H1 (cell line): ENCODE measurements at regions of chr1 and their contacts with region 1.

Region 1: DNA sequence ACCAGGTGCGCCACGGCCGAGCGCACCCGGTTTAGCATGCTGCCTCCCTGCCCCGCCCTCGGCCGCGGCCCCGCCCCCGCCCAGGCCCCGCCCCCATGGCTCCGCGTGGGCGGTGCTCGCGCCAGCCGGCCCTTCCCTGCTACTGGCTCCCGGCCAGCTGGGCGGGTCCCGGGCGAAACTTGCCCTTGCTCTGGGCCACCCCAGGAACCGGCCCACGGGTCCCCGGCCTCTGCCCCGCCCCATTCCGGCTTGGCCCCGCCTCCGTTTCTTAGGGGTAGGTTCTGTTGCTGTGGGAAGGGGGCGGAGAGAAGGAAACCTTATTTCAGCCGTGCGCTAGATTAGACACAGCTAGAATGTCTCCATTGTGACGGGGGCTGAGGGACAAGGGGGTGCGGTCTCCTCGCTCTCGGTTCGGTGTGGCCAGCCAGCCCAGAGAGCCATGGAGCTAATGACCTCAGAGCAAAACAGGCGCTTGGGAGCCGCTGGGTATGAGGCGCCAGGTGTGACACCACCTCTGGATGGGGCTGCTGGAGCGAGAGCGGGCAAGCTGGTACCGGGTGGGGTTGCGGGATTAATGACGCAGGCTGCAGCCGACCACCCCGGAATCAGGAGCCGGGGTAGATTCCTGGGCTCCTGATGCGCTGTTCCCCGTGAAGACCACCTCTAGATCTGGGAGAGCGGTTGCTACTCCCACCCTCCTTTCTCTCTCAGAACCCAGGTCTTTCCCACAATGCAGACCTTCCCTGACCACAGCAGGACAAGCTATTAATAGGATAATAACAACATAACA is at the start of gene PPM1J:
- DNase-seq: peak; percentile 85 to 100
- H3K4me3 ChIP-seq: peak within 1 kb of the TSS; percentile 60 to 81 (median 73)
- H3K27ac ChIP-seq: no peak within 1 kb of the TSS
- H3K4me1 ChIP-seq: peaks cover 0 to 20% (median 13%) of the 10 kb centered on the region in 4 experiments; a peak in 6 of 7 replicates
- H3K27me3 ChIP-seq: peaks cover 0 to 29% (median 16%) of the 10 kb centered on the region in 4 experiments; a peak in 5 of 7 replicates
- CTCF ChIP-seq: no peak
- EP300 ChIP-seq: no peak
- POLR2A ChIP-seq: no peak
- RAD21 ChIP-seq: no peak; a peak in 1 of 4 replicates
- total RNA-seq, gene PPM1J: 17.5 and 19.4 TPM in 2 replicates

Region 2: DNA sequence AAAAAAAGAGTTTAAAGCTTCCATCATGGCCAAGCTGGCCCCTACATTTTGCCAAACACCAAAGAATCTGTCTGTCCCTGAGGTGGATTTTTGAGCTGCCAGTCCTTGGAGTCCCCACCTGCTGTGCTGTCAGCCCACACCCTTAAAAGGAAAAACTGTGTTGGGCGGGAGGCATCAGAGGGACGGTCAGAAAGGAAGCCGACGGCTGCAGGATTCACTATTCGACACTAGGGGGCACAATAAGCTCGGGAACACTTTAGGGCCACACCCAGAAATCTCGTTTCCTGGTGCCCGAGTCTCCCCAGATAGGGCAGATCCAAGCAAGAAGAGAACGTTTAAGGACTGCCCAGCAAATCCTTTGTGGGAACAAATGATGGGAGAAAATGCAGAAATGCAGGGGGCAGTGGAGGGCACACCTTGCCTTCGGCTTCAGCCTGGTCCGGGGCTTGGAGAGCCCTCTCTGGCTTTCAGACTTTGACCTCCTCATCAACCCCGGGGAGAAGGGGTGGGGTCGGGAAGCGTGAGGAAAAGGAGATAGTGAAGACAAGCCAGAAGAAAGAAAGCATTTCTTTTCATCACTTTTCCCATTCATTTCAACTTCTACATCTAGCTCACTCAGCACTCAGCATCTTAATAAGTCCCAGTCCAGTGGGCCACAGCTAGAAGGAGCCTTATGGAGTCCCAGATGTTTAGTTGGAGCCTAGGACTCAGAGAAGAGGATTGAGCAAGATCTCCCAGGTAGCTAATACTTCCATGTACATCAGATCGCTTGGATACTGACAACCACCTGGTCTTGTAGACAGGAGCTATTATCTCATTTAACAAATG is 324.5 kb before region 1 on chr1:
- CTCF ChIA-PET with region 1: interaction called, 10 read pairs
- POLR2A ChIA-PET with region 1: interaction called, 3 read pairs
- DNase-seq: peak; percentile 85 to 93
- H3K4me3 ChIP-seq: peak overlapping the region in 3 of 4 experiments; percentile 8 to 54 (median 15); a peak in 4 of 8 replicates
- H3K27ac ChIP-seq: no peak overlapping the region
- H3K4me1 ChIP-seq: peaks cover 2 to 14% (median 8%) of the 10 kb centered on the region in 4 experiments; a peak in 5 of 7 replicates
- H3K27me3 ChIP-seq: no peaks in the 10 kb centered on the region
- CTCF ChIP-seq: peak; percentile 72 to 97 (median 78)
- EP300 ChIP-seq: no peak
- POLR2A ChIP-seq: no peak
- RAD21 ChIP-seq: peak; percentile 92 to 94

Region 3: DNA sequence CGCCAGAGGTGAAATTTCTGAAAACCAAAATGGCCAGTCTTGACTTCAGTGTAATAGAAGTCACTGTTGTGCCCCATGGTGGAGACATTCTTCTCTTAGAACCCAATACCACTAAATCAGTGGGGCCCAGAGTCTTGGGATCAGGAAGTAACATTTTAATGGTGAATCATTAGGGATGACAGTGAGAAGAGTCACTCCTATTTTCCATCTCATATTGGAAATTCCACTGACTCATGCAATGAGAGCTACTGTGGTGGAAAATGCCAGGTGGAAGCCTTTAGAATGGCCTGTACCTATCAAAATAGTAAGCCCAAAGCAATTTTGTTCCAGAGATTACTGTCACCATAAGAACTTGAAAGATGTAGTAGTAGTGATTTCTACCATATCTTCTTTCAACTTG is 20.3 kb after region 1 on chr1:
- CTCF ChIA-PET with region 1: interaction called, 73 read pairs
- POLR2A ChIA-PET with region 1: no interaction called
- DNase-seq: no peak
- H3K4me3 ChIP-seq: no peak overlapping the region
- H3K27ac ChIP-seq: no peak overlapping the region
- H3K4me1 ChIP-seq: no peaks in the 10 kb centered on the region
- H3K27me3 ChIP-seq: no peaks in the 10 kb centered on the region; a peak in 1 of 7 replicates
- CTCF ChIP-seq: no peak
- EP300 ChIP-seq: no peak
- POLR2A ChIP-seq: no peak
- RAD21 ChIP-seq: no peak

Region 4: DNA sequence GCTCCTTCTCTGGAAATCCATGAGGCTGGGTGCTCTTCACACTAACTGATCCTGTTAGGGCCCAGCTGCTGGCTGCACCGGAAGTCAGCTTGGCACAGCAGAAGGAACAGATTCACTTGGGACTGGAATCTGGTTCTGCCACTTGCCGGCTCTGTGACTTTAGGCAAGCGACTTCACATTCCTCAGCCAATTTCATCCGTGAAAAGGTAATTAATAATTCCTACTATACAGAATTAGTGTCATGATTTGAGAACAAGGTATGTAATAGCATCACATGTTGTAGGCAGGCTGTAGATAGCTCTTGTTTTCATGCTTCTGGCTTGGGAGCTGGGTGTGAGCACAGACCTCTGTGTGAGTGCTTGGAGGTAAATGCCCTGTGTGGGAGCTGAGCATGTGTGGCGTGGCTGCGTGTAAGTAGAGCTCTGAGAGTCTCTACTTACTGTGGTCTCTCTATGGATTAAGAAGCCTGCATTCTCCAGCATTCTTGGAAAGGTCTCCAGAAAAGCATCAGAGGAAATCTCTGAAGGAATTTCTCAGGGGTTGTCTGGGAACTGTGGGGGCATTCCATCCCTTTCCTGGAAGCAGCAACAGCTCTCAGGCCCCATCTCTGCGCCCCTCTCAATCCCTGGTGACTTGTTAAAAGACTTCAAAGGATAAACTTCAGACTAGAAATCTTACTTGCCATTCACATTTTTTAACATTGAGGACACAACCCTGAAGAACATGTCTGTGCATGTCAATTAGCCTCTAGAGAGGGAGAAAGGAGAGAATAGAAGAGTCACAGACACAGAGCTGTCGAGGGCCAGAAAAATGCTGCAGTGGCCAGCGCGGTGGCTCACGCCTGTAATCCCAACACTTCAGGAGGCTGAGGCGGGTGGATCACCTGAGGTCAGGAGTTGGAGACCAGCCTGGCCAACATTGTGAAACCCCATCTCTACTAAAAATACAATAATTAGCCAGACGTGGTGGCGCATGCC is 47.4 kb after region 1 on chr1:
- CTCF ChIA-PET with region 1: interaction called, 84 read pairs
- POLR2A ChIA-PET with region 1: interaction called, 3 read pairs
- DNase-seq: no peak
- H3K4me3 ChIP-seq: no peak overlapping the region
- H3K27ac ChIP-seq: no peak overlapping the region
- H3K4me1 ChIP-seq: peaks cover 0 to 4% (median 0%) of the 10 kb centered on the region in 4 experiments; a peak in 4 of 7 replicates
- H3K27me3 ChIP-seq: no peaks in the 10 kb centered on the region; a peak in 2 of 7 replicates
- CTCF ChIP-seq: no peak
- EP300 ChIP-seq: no peak
- POLR2A ChIP-seq: no peak
- RAD21 ChIP-seq: no peak

Region 5: GRCh38 chr1:112803906-112804762 is 88.7 kb after region 1 on chr1:
- CTCF ChIA-PET with region 1: interaction called, 547 read pairs
- POLR2A ChIA-PET with region 1: interaction called, 10 read pairs
- DNase-seq: peak in 1 of 2 experiments; percentile 80
- H3K4me3 ChIP-seq: no peak overlapping the region
- H3K27ac ChIP-seq: no peak overlapping the region
- H3K4me1 ChIP-seq: peaks cover 2 to 6% (median 4%) of the 10 kb centered on the region in 4 experiments; a peak in 5 of 7 replicates
- H3K27me3 ChIP-seq: no peaks in the 10 kb centered on the region
- CTCF ChIP-seq: peak; percentile 98 to 99 (median 98)
- EP300 ChIP-seq: no peak
- POLR2A ChIP-seq: no peak
- RAD21 ChIP-seq: peak; percentile 100

Region 6: DNA sequence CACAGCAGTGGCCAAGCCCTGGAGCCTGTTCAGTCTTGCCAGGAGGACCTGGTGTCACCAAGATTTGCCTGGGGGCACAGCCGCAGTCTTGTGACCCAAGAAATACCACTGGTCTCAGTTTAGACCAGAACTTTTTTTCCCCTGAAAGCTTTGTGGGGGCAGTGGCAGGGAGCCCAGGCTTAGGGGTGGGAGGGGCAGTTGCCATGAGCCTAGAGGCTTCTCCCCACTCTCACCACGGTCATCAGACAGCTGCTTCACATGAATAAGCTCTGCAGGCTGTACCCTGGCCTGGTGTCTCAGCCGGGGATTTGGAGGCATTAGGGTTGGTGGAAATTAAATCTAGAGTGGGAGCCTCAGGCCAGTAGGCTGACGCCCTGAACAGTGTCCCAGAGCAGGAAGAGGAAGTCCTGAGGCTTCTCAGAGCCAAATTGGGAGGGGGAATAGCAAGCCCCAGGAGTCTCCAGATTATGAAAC is 166.8 kb after region 1 on chr1:
- CTCF ChIA-PET with region 1: interaction called, 19 read pairs
- POLR2A ChIA-PET with region 1: no interaction called
- DNase-seq: no peak
- H3K4me3 ChIP-seq: no peak overlapping the region
- H3K27ac ChIP-seq: no peak overlapping the region
- H3K4me1 ChIP-seq: peaks cover 0 to 14% (median 5%) of the 10 kb centered on the region in 4 experiments; a peak in 4 of 7 replicates
- H3K27me3 ChIP-seq: no peaks in the 10 kb centered on the region
- CTCF ChIP-seq: no peak
- EP300 ChIP-seq: no peak
- POLR2A ChIP-seq: no peak
- RAD21 ChIP-seq: no peak

Region 7: DNA sequence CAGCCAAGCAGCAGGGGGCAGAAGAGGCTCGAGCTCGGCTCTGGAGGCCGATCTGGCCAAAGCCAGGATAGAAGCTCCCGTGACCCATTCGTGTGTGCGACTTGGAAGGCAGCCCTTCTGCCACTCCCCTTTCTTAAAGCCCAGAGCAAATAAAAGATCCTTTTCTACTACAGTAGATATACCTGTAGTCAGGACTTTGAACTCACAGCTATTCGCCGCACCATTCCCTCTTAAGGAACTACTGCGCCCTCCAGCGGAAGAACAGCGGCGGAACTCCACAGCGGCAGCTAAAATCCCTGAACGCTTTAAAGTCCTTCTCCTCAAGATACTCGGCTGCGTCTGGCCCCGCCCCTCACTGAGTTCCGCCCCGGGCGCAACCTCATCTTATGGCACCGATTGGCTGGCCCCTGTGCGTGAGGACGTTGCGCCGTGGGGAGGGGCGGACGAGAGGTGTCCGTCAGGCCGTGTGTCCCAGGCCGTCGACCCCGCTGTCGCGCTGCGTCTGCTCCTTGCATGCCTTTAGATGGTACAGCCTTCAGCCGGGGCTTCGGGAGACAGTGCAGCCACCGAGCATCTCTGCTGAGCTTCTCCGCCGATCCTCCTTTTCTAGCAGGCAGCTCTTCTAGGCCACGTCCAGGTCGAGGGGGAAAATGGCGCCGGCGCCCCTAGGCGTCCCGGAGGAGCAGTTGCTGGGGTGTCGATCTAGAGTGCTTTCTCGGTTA is 357.5 kb after region 1 on chr1 and contains the start of gene LRIG2:
- CTCF ChIA-PET with region 1: interaction called, 32 read pairs
- POLR2A ChIA-PET with region 1: interaction called, 4 read pairs
- DNase-seq: peak; percentile 98
- H3K4me3 ChIP-seq: peak within 1 kb of the TSS; percentile 52 to 97 (median 88)
- H3K27ac ChIP-seq: peak within 1 kb of the TSS; percentile 92
- H3K4me1 ChIP-seq: peaks cover 0 to 5% (median 2%) of the 10 kb centered on the region in 4 experiments; a peak in 4 of 7 replicates
- H3K27me3 ChIP-seq: no peaks in the 10 kb centered on the region
- CTCF ChIP-seq: peak; percentile 72 to 83 (median 76)
- EP300 ChIP-seq: no peak
- POLR2A ChIP-seq: peak; percentile 85 to 86
- RAD21 ChIP-seq: peak; percentile 75 to 80
- total RNA-seq, gene LRIG2: 20.4 and 20.9 TPM in 2 replicates